PC-3 (cell line): ENCODE measurements at regions of chr17 and their contacts with region 1.

Region 1: GRCh38 chr17:77054936-77055335 is 85.8 kb upstream of the SEC14L1 start:
- DNase-seq: no peak
- ATAC-seq: no peak; the same call in 1 of the 2 replicates
- H3K4me3 ChIP-seq: no peak overlapping the region
- H3K27ac ChIP-seq: no peak overlapping the region
- H3K4me1 ChIP-seq: no peaks in the 10 kb centered on the region
- H3K27me3 ChIP-seq: peaks cover 22% of the 10 kb centered on the region
- CTCF ChIP-seq: no peak

Region 2: GRCh38 chr17:76791053-76791980 is 263.6 kb before region 1 on chr17:
- CTCF ChIA-PET with region 1: no interaction called
- POLR2A ChIA-PET with region 1: no interaction called
- intact Hi-C with region 1: loop called (anchors 2 kb)
- DNase-seq: peak; percentile 83
- ATAC-seq: peak; percentile 84
- H3K4me3 ChIP-seq: peak overlapping the region; percentile 27; the same call in 1 of the 2 replicates
- H3K27ac ChIP-seq: peak overlapping the region; percentile 51
- H3K4me1 ChIP-seq: peaks cover 24% of the 10 kb centered on the region
- H3K27me3 ChIP-seq: no peaks in the 10 kb centered on the region
- CTCF ChIP-seq: no peak

Region 3: DNA sequence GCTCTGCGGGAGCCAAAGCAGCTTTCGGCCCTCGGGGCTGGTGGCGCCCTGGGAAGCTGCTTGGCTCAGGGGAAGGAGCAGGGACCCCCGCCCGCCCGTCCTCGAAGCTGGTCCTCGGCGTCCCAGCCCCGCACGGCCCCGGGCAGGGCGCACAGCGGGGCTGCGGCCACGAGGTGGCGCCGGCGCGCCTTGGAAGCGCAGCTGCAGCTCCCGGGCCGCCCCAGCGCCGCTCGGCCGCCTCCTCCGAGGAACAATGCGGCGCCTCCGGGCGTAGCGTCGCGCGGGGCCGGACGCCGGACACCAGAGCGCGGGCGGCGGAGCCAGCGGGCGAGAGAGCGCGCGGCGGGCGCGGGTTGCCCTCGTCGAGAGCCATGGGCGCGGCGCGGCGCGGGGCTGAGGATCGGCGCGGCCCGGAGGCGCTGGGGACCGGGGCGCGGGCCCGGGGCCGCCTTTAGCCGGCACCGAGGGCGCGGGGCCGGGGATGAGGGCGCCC is 186.7 kb before region 1 on chr17 and contains the start of gene MGAT5B:
- CTCF ChIA-PET with region 1: interaction called, 36 read pairs
- POLR2A ChIA-PET with region 1: no interaction called
- intact Hi-C with region 1: loop called (anchors 1 kb)
- DNase-seq: peak; percentile 96
- ATAC-seq: peak; percentile 76
- H3K4me3 ChIP-seq: peak within 1 kb of the TSS; percentile 65
- H3K27ac ChIP-seq: peak within 1 kb of the TSS; percentile 33
- H3K4me1 ChIP-seq: peaks cover 46% of the 10 kb centered on the region
- H3K27me3 ChIP-seq: no peaks in the 10 kb centered on the region
- CTCF ChIP-seq: peak; percentile 82
- total RNA-seq, gene MGAT5B: 4.9 and 10.3 TPM in 2 replicates

Region 4: GRCh38 chr17:77011173-77012011 is 43.5 kb before region 1 on chr17:
- CTCF ChIA-PET with region 1: interaction called, 6 read pairs
- POLR2A ChIA-PET with region 1: no interaction called
- intact Hi-C with region 1: loop called (anchors 1 kb)
- DNase-seq: peak; percentile 83
- ATAC-seq: 0 out of 2 replicates have a peak, but pooled peaks have one; percentile 38
- H3K4me3 ChIP-seq: no peak overlapping the region
- H3K27ac ChIP-seq: no peak overlapping the region
- H3K4me1 ChIP-seq: no peaks in the 10 kb centered on the region; the same call in 1 of the 2 replicates
- H3K27me3 ChIP-seq: 0 out of 2 replicates have a peak, but pooled peaks cover 4% of the 10 kb centered on the region
- CTCF ChIP-seq: peak; percentile 94

Region 5: DNA sequence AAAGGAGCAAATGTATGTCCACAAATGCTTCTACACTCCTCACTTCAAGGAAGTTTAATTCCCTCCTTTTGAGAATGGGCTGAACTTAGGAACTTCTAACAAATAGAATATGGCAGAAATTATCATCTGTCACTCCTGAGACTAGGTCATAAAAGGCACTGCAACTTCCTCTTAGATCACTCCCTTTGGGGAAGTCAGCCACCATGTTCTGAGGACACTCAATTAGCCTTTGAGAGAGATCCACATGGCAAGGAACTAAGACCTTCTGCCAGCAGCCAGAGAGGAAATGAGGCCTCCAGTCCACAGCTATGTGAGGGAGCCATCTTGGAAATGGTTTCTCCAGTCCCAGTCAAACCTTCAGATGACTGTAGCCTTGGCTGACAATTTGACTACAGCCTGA is 27.7 kb before region 1 on chr17:
- CTCF ChIA-PET with region 1: no interaction called
- POLR2A ChIA-PET with region 1: no interaction called
- intact Hi-C with region 1: no loop called
- DNase-seq: no peak
- ATAC-seq: no peak
- H3K4me3 ChIP-seq: no peak overlapping the region
- H3K27ac ChIP-seq: no peak overlapping the region
- H3K4me1 ChIP-seq: no peaks in the 10 kb centered on the region
- H3K27me3 ChIP-seq: peaks cover 23% of the 10 kb centered on the region; the same call in 1 of the 2 replicates
- CTCF ChIP-seq: no peak

Region 6: GRCh38 chr17:77066165-77066564 is 11.2 kb after region 1 on chr17:
- CTCF ChIA-PET with region 1: interaction called, 12 read pairs
- POLR2A ChIA-PET with region 1: no interaction called
- intact Hi-C with region 1: no loop called
- DNase-seq: no peak
- ATAC-seq: 0 out of 2 replicates have a peak, but pooled peaks have one; percentile 7
- H3K4me3 ChIP-seq: no peak overlapping the region
- H3K27ac ChIP-seq: no peak overlapping the region
- H3K4me1 ChIP-seq: peaks cover 9% of the 10 kb centered on the region
- H3K27me3 ChIP-seq: no peaks in the 10 kb centered on the region
- CTCF ChIP-seq: no peak

Region 7: DNA sequence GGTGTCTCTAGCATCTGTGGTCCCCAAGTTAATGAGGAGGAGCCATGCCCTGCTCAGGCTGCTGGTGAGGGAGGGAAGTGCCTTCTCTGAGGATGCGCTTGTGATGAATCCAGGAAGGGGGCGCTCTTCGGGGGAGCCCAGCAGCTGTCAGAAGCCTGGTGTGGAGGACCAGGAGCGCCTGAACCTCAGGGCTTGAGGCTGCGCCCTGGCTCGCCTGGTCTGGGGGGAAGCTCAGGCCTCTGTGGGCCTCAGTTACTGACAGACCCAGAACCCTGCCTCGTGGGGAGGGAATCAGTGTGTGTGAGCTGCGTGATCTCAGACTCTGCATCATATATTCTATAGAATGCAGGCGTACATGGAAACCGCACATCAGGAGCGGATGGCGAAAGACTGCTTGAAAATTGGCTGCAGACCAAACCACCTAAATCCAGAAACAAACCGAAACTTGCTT is 212.0 kb after region 1 on chr17:
- CTCF ChIA-PET with region 1: no interaction called
- POLR2A ChIA-PET with region 1: no interaction called
- intact Hi-C with region 1: no loop called
- DNase-seq: no peak
- ATAC-seq: peak; percentile 53; the same call in 1 of the 2 replicates
- H3K4me3 ChIP-seq: no peak overlapping the region
- H3K27ac ChIP-seq: no peak overlapping the region
- H3K4me1 ChIP-seq: peaks cover 10% of the 10 kb centered on the region; the same call in 1 of the 2 replicates
- H3K27me3 ChIP-seq: no peaks in the 10 kb centered on the region
- CTCF ChIP-seq: peak; percentile 60